ENCODE measurements at regions of chr2 and their contacts with region 1.

Region 1: GRCh38 chr2:47534179-47534919 is 131.4 kb downstream of the MSH2 start:
- DNase-seq: peak in 1 of 2 donors; percentile 14
- ATAC-seq: peak in 1 of 8 donors; percentile 38
- H3K4me3 ChIP-seq: no peak overlapping the region
- H3K27ac ChIP-seq: no peak overlapping the region
- H3K4me1 ChIP-seq: peaks cover 0 to 23% (median 5%) of the 10 kb centered on the region in 9 donors
- H3K27me3 ChIP-seq: no peaks in the 10 kb centered on the region
- CTCF ChIP-seq: no peak

Region 2: GRCh38 chr2:47486841-47487497 is 47.4 kb before region 1 on chr2:
- intact Hi-C with region 1: no loop called
- DNase-seq: no peak
- ATAC-seq: no peak
- H3K4me3 ChIP-seq: no peak overlapping the region
- H3K27ac ChIP-seq: no peak overlapping the region
- H3K4me1 ChIP-seq: peaks cover 0 to 7% (median 0%) of the 10 kb centered on the region in 9 donors
- H3K27me3 ChIP-seq: no peaks in the 10 kb centered on the region
- CTCF ChIP-seq: no peak

Region 3: DNA sequence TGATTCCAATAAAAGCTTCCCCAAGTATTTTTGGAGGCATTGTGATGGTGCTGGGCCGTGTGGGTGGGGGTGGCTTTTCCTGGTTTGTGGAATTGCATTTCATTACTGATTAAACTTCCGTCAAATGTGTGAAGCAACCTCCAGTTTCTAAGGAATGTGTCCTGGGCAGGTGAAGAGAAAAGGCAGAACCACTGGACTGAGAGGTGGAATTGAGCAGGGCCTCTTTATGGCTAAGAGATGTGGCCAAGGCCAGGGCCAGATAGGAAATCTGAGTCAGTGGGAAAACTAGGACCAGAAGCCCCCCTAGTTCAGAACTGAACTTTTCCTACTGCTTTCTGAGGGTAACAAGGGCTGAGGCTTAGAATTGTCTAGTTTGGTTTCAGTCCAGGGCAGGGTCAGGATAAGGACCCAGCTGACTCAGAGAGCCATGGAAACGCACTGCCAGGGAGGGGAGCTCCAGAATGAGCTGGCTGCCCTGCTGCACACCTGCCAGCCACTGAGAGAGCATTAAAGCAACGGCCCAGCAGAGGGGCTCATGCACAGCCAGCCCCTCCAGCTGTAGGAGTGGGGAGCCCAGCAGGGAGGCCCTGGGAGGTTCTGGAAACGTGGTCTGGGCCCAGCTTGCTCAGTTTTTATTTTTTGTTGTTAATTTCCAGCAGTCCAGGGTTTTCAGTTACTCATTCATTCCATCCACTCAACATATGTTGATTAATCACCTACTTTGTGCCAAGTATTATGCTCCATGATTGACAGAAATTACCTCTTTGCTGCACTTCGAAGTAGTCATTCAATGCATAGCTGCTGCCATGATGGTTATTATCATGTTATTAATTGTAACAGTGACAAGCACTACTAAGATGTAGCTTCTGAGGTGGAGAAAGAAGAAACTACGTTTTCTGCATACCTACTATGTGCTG is 24.7 kb after region 1 on chr2:
- intact Hi-C with region 1: loop called in 1 of 10 experiments (anchors 2 kb)
- DNase-seq: no peak
- ATAC-seq: peak; percentile 17 to 63 (median 50)
- H3K4me3 ChIP-seq: no peak overlapping the region
- H3K27ac ChIP-seq: peak overlapping the region in 9 of 10 donors; percentile 20 to 81 (median 49)
- H3K4me1 ChIP-seq: peaks cover 0 to 29% (median 15%) of the 10 kb centered on the region in 9 donors
- H3K27me3 ChIP-seq: peaks cover 0 to 6% (median 0%) of the 10 kb centered on the region in 7 donors
- CTCF ChIP-seq: no peak

Region 4: DNA sequence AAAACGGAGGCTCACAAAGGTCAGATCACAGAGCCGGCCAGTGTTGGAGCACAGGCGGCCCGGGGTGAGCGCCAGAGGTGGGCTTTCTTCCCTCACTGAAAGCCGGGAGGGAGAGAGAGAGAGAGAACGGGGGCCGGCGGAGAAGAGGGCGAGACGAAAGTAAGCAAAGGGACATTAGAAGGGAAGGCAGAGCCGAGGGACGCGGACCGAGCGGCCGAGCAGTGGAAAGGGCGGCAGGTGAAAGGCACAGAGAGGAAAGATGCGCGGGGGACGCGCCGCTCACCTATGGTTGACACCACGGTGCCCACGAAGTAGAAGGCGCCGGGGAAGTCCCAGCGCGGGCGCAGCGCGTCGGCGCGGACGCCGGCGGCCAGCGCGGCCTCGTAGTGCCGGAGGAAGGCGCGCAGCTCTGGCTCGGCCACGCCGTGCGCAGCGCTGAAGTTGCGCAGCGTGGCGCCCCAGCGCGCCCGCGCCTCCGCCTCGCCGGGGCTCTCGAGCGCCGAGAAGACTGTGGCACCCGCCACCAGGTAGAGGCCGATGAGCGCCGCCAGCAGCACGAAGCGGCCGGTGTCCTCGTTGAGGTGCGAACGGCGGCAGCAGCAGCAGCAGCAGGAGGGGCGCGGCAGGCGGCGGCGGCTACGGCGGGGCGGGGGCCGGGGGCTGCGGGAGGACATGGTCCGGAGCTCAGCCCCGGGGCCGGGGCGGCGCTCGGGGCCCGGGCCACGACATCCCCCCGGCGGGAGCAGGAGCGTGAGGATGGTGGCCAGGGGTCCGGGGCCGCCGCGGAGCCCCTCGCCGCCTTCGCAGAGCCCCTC is 35.5 kb after region 1 on chr2:
- intact Hi-C with region 1: no loop called
- DNase-seq: no peak
- ATAC-seq: peak in 1 of 8 donors; percentile 48
- H3K4me3 ChIP-seq: peak overlapping the region in 7 of 10 donors; percentile 7 to 37 (median 14)
- H3K27ac ChIP-seq: no peak overlapping the region
- H3K4me1 ChIP-seq: peaks cover 6 to 26% (median 17%) of the 10 kb centered on the region in 9 donors
- H3K27me3 ChIP-seq: peaks cover 16 to 85% (median 79%) of the 10 kb centered on the region in 7 donors
- CTCF ChIP-seq: no peak

Region 5: GRCh38 chr2:48414980-48415835 is 880.9 kb after region 1 on chr2:
- intact Hi-C with region 1: loop called in 1 of 10 experiments (anchors 10 kb)
- DNase-seq: no peak
- ATAC-seq: peak; percentile 21 to 55 (median 46)
- H3K4me3 ChIP-seq: peak overlapping the region in 1 of 10 donors; percentile 9
- H3K27ac ChIP-seq: peak overlapping the region in 5 of 10 donors; percentile 18 to 60 (median 35)
- H3K4me1 ChIP-seq: peaks cover 13 to 56% (median 33%) of the 10 kb centered on the region in 9 donors
- H3K27me3 ChIP-seq: no peaks in the 10 kb centered on the region
- CTCF ChIP-seq: no peak

Measured in heart right ventricle (tissue), 16 donors.